B cell (primary cell): ENCODE measurements at regions of chr19 and their contacts with region 1.

Region 1: GRCh38 chr19:11924886-11925650 is at the start of gene ZNF700:
- DNase-seq: peak; percentile 96
- ATAC-seq: peak; percentile 85
- H3K4me3 ChIP-seq: peak within 1 kb of the TSS; percentile 78 to 97 (median 80)
- H3K4me3 Mint-ChIP-seq: peak within 1 kb of the TSS; percentile 98
- H3K27ac ChIP-seq: peak within 1 kb of the TSS; percentile 95 to 97
- H3K27ac Mint-ChIP-seq: peak within 1 kb of the TSS; percentile 99
- H3K4me1 ChIP-seq: peaks cover 10 to 28% of the 10 kb centered on the region in 2 donors
- H3K4me1 Mint-ChIP-seq: peaks cover 40% of the 10 kb centered on the region
- H3K27me3 ChIP-seq: no peaks in the 10 kb centered on the region
- H3K27me3 Mint-ChIP-seq: no peaks in the 10 kb centered on the region
- CTCF ChIP-seq: no peak
- total RNA-seq, gene ZNF700: 34.9 and 40.5 TPM in 2 replicates

Region 2: DNA sequence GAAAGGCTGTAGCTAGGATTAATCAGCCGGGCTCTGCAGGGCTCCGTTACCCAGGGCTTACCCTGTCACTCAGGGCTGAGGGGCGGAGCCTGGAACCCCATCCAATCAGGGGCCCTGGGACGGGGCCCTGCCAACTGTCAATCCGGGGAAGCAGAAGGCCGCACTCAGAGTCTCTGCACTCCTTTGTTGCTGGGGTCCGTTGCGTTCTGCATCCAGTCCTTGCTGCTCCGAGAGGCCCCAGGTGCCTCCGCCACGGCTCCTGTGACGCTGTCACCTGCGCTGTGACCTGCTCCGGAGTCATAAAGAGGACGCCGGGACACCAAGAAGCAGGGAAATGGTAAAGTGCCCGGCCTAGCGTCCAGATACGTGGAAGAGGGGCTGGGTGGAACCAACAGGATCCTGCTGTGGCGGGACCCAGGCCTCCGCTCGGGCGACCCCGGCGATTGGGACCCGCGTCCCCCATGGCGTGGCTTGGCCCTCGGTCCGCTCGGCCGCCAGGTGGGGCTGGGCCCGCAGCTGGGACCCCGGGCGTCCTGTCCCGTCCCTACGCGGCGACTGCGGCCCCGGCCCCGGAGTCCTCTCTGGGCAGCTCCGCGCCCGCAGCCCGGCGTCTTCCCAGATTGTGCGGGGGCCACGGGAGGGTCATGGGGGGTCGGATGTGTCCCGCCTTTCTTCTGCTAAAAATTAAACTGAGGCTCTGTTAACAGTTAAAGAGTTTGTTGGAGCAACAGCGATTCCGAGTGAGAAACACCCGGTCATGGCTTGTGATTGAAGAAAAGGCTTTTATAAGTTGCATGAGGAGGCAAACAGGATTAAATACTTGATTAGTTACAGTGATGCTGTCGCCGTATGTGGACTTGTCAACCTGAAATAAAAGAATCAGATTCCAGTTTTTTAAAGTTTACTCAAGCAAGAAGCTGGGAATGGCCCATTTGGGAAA is 126.4 kb before region 1 on chr19 and contains the start of gene ZNF491:
- CTCF ChIA-PET with region 1: interaction called, 44 read pairs
- POLR2A ChIA-PET with region 1: no interaction called
- intact Hi-C with region 1: loop called (anchors 1 kb)
- DNase-seq: peak; percentile 87
- ATAC-seq: peak; percentile 98
- H3K4me3 ChIP-seq: peak within 1 kb of the TSS; percentile 53 to 76 (median 61)
- H3K4me3 Mint-ChIP-seq: peak within 1 kb of the TSS; percentile 93
- H3K27ac ChIP-seq: peak within 1 kb of the TSS; percentile 2 to 52
- H3K27ac Mint-ChIP-seq: peak within 1 kb of the TSS; percentile 74
- H3K4me1 ChIP-seq: peaks cover 14 to 17% of the 10 kb centered on the region in 2 donors
- H3K4me1 Mint-ChIP-seq: peaks cover 21% of the 10 kb centered on the region
- H3K27me3 ChIP-seq: no peaks in the 10 kb centered on the region
- H3K27me3 Mint-ChIP-seq: no peaks in the 10 kb centered on the region
- CTCF ChIP-seq: no peak
- total RNA-seq, gene ZNF491: 1.7 and 2.4 TPM in 2 replicates

Region 3: GRCh38 chr19:11881151-11881800 is 43.8 kb before region 1 on chr19:
- CTCF ChIA-PET with region 1: interaction called, 9 read pairs
- POLR2A ChIA-PET with region 1: no interaction called
- intact Hi-C with region 1: loop called (anchors 2 kb)
- DNase-seq: peak; percentile 78
- ATAC-seq: peak; percentile 56
- H3K4me3 ChIP-seq: no peak overlapping the region
- H3K4me3 Mint-ChIP-seq: no peak overlapping the region
- H3K27ac ChIP-seq: no peak overlapping the region
- H3K27ac Mint-ChIP-seq: no peak overlapping the region
- H3K4me1 ChIP-seq: peaks cover 0 to 6% of the 10 kb centered on the region in 2 donors
- H3K4me1 Mint-ChIP-seq: peaks cover 4% of the 10 kb centered on the region
- H3K27me3 ChIP-seq: no peaks in the 10 kb centered on the region
- H3K27me3 Mint-ChIP-seq: no peaks in the 10 kb centered on the region
- CTCF ChIP-seq: peak; percentile 77

Region 4: GRCh38 chr19:12035220-12036153 is 110.4 kb after region 1 on chr19 and contains the start of gene ZNF433:
- CTCF ChIA-PET with region 1: interaction called, 10 read pairs
- POLR2A ChIA-PET with region 1: no interaction called
- intact Hi-C with region 1: no loop called
- DNase-seq: peak; percentile 78
- ATAC-seq: peak; percentile 97
- H3K4me3 ChIP-seq: peak within 1 kb of the TSS; percentile 60 to 88 (median 73)
- H3K4me3 Mint-ChIP-seq: peak within 1 kb of the TSS; percentile 95
- H3K27ac ChIP-seq: peak within 1 kb of the TSS in 1 of 2 donors; percentile 59
- H3K27ac Mint-ChIP-seq: peak within 1 kb of the TSS; percentile 86
- H3K4me1 ChIP-seq: peaks cover 3 to 13% of the 10 kb centered on the region in 2 donors
- H3K4me1 Mint-ChIP-seq: peaks cover 19% of the 10 kb centered on the region
- H3K27me3 ChIP-seq: no peaks in the 10 kb centered on the region
- H3K27me3 Mint-ChIP-seq: no peaks in the 10 kb centered on the region
- CTCF ChIP-seq: no peak
- total RNA-seq, gene ZNF433: 7.3 and 7.6 TPM in 2 replicates

Region 5: DNA sequence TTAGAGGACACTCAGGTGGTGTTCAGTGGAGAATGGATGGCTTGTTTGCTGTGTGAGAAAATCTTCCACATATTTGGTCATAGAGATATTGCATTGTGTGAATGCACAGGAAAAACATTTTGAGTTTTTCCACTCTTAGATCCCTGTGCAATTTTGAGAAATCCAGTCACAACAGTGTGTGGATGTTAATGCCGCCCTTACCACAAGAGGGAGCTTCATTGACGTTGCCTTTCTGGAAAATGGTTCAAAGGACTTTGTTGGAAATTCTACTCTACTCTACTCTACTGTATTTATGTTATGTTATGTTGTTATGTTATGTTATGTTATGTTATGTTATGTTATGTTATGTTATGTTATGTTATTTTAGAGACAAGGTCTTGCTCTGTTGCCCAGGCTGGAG is 201.6 kb after region 1 on chr19:
- CTCF ChIA-PET with region 1: interaction called, 11 read pairs
- POLR2A ChIA-PET with region 1: no interaction called
- intact Hi-C with region 1: no loop called
- DNase-seq: peak; percentile 37
- ATAC-seq: no peak
- H3K4me3 ChIP-seq: no peak overlapping the region
- H3K4me3 Mint-ChIP-seq: no peak overlapping the region
- H3K27ac ChIP-seq: no peak overlapping the region
- H3K27ac Mint-ChIP-seq: no peak overlapping the region
- H3K4me1 ChIP-seq: no peaks in the 10 kb centered on the region
- H3K4me1 Mint-ChIP-seq: no peaks in the 10 kb centered on the region
- H3K27me3 ChIP-seq: no peaks in the 10 kb centered on the region
- H3K27me3 Mint-ChIP-seq: no peaks in the 10 kb centered on the region
- CTCF ChIP-seq: peak; percentile 61